ENCODE measurements at regions of chrX and their contacts with region 1.

Region 1: GRCh38 chrX:71283403-71284143 is at the start of gene NONO:
- DNase-seq: peak; percentile 93 to 99 (median 96)
- ATAC-seq: peak; percentile 93
- H3K4me3 ChIP-seq: peak within 1 kb of the TSS; percentile 80
- H3K27ac ChIP-seq: peak within 1 kb of the TSS; percentile 98
- H3K4me1 ChIP-seq: peaks cover 3 to 7% of the 10 kb centered on the region in 2 experiments; a peak in 4 of 5 replicates
- H3K27me3 ChIP-seq: no peaks in the 10 kb centered on the region
- CTCF ChIP-seq: peak; percentile 25 to 55 (median 43); a peak in 4 of 6 replicates
- EP300 ChIP-seq: no peak; the same call in 1 of the 2 replicates
- POLR2A ChIP-seq: peak; percentile 95
- RAD21 ChIP-seq: no peak
- polyA plus RNA-seq, gene NONO: 353 to 392 TPM

Region 2: DNA sequence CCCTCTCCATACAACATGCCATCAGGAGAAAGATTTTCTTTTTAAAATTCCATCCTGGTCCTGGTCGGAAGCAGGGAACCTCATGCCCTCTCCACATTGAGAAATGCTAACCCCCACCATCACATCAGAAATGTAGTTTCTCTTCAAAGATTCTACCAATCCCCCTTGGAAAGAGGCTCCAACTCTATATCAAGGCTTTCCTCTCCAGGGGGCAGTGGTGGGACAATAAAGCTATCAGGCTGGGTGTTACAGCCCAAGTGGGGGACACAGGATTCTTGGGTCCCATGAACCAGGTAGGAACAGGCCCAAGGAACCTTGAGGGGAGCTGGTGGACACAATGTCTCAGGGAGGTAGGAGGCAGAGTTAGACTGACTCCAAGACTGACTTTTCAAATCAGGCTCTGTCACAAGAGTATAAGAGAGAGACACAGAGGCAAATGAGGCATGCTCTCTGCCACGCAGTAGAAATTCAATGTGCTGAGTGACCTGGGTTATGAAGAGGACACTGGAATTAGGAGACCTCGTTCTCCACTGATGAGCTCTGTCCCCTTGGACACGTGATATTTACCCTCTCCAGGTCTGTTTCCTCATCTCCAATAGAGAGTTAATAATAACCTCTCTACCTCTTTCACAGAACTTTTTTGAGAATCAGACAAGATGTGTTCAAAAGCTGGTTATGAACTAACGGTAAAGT is 56.1 kb before region 1 on chrX:
- CTCF ChIA-PET with region 1: no interaction called
- POLR2A ChIA-PET with region 1: interaction called, 5 read pairs
- in situ Hi-C with region 1: no loop called
- intact Hi-C with region 1: loop called (anchors 2 kb)
- DNase-seq: peak in 1 of 4 experiments; percentile 23
- ATAC-seq: peak; percentile 63
- H3K4me3 ChIP-seq: no peak overlapping the region
- H3K27ac ChIP-seq: no peak overlapping the region
- H3K4me1 ChIP-seq: peaks cover 4 to 9% of the 10 kb centered on the region in 2 experiments; a peak in 2 of 5 replicates
- H3K27me3 ChIP-seq: peaks cover 2 to 19% of the 10 kb centered on the region in 2 experiments; a peak in 3 of 5 replicates
- CTCF ChIP-seq: peak; percentile 25 to 42 (median 38); a peak in 4 of 6 replicates
- EP300 ChIP-seq: no peak
- POLR2A ChIP-seq: no peak
- RAD21 ChIP-seq: peak in 1 of 2 experiments; percentile 37; a peak in 2 of 4 replicates

Region 3: DNA sequence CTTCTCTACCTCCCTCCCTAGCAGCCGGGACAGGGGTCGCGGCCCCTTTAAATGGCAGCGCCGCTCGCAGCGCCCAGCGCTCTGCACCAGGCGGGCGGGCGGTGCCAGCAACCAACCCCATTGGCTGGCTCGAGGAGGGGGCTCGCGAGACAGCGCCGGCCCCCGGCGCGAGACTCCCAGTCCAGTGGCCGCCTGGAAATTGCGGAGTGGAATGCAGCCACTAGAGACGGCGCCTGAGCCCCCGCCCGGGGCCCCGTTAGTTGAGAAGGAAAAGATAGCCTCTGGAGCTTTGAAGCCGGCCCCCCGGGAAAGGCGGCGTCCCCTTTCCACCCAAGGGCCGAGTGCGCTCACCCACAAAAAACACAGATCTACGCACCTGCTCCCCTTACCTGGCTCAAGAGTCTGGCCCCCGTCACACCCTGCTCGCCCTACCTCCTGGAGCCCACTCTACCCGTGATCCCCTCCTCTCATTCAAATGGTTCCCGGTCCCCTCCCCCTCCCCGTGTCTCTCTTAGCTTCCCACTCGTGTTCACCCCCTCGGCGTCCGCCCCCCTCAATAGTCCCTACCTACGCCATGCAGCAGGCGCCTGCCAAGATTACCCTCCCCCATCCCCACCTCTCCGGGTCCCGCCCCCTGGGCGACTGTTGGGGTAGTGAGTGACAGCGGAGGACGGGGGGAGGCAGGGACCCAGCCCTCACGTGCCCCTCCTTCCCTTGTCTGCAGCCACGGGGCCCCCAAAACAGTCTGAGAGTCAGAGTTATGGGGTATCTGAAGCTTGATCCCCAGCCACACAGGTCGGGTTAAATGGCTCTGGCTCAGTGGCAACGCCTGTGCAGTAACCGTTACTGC is 29.3 kb before region 1 on chrX and contains the start of gene ZMYM3:
- CTCF ChIA-PET with region 1: no interaction called
- POLR2A ChIA-PET with region 1: interaction called, 4 read pairs
- in situ Hi-C with region 1: no loop called
- intact Hi-C with region 1: loop called (anchors 1 kb)
- DNase-seq: peak; percentile 89 to 92 (median 92)
- ATAC-seq: peak; percentile 94
- H3K4me3 ChIP-seq: peak within 1 kb of the TSS; percentile 95
- H3K27ac ChIP-seq: peak within 1 kb of the TSS; percentile 87
- H3K4me1 ChIP-seq: peaks cover 24 to 29% of the 10 kb centered on the region in 2 experiments; a peak in 4 of 5 replicates
- H3K27me3 ChIP-seq: no peaks in the 10 kb centered on the region
- CTCF ChIP-seq: no peak
- EP300 ChIP-seq: no peak
- POLR2A ChIP-seq: 0 out of 2 replicates have a peak, but pooled peaks have one; percentile 25
- RAD21 ChIP-seq: no peak
- polyA plus RNA-seq, gene ZMYM3: 4.3 to 5.1 TPM

Region 4: DNA sequence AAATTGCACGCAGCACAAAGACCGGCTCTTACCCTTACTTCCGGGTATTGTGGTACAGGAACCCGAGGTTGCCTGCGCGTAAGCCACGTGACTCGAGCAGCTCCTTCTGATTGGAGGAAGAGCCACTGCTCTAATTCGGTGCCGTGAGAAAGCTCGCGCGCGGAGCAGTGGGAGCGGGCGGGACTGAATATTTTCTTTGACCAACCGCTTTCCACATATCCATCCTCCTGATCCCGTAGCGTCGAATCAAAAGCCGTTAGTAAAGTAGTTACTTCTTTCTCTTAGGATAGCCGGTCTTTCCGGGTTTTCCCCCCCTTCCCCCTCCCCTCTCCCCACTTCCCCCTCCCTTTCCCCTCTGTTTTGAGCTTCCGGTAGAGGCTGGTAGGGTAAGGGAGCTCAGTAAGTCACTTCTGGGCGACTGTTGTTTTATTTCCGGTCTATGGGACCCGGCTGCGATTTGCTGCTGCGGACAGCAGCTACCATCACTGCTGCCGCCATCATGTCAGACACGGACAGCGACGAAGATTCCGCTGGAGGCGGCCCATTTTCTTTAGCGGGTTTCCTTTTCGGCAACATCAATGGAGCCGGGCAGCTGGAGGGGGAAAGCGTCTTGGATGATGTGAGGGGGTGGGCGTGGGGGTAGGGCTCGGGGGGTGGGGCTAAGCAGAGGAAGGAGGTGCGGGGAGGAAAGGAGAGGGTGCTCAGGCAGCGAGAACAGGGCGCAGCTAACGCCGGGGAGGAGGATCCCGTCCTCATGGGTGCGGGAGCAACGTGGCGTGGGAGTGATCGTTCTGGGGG is 82.5 kb after region 1 on chrX and contains the start of gene TAF1:
- CTCF ChIA-PET with region 1: no interaction called
- POLR2A ChIA-PET with region 1: interaction called, 6 read pairs
- in situ Hi-C with region 1: no loop called
- intact Hi-C with region 1: loop called (anchors 5 kb)
- DNase-seq: peak; percentile 92 to 97 (median 94)
- ATAC-seq: peak; percentile 91
- H3K4me3 ChIP-seq: peak within 1 kb of the TSS; percentile 83
- H3K27ac ChIP-seq: peak within 1 kb of the TSS; percentile 99
- H3K4me1 ChIP-seq: peaks cover 11 to 12% of the 10 kb centered on the region in 2 experiments; a peak in 4 of 5 replicates
- H3K27me3 ChIP-seq: no peaks in the 10 kb centered on the region
- CTCF ChIP-seq: no peak
- EP300 ChIP-seq: peak; percentile 60
- POLR2A ChIP-seq: 0 out of 2 replicates have a peak, but pooled peaks have one; percentile 5
- RAD21 ChIP-seq: no peak
- polyA plus RNA-seq, gene TAF1: 6.4 to 10.5 TPM